Activated CD4-positive, alpha-beta T cell treated with anti-CD3 and anti-CD28 coated beads for 36 hours (primary cell): ENCODE measurements at regions of chr15 and their contacts with region 1.

Region 1: GRCh38 chr15:51907136-51907914 is 64.3 kb downstream of the LEO1 start:
- DNase-seq: no peak
- ATAC-seq: peak; percentile 49
- H3K4me3 Mint-ChIP-seq: no peak overlapping the region
- H3K27ac Mint-ChIP-seq: no peak overlapping the region
- H3K4me1 Mint-ChIP-seq: peaks cover 2% of the 10 kb centered on the region
- H3K27me3 Mint-ChIP-seq: no peaks in the 10 kb centered on the region

Region 2: GRCh38 chr15:51782357-51782896 is 124.9 kb before region 1 on chr15:
- CTCF ChIA-PET with region 1: no interaction called
- POLR2A ChIA-PET with region 1: no interaction called
- intact Hi-C with region 1: loop called in 1 of 2 experiments (anchors 2 kb)
- DNase-seq: no peak
- ATAC-seq: no peak
- H3K4me3 Mint-ChIP-seq: no peak overlapping the region
- H3K27ac Mint-ChIP-seq: no peak overlapping the region
- H3K4me1 Mint-ChIP-seq: peaks cover 3% of the 10 kb centered on the region
- H3K27me3 Mint-ChIP-seq: no peaks in the 10 kb centered on the region

Region 3: DNA sequence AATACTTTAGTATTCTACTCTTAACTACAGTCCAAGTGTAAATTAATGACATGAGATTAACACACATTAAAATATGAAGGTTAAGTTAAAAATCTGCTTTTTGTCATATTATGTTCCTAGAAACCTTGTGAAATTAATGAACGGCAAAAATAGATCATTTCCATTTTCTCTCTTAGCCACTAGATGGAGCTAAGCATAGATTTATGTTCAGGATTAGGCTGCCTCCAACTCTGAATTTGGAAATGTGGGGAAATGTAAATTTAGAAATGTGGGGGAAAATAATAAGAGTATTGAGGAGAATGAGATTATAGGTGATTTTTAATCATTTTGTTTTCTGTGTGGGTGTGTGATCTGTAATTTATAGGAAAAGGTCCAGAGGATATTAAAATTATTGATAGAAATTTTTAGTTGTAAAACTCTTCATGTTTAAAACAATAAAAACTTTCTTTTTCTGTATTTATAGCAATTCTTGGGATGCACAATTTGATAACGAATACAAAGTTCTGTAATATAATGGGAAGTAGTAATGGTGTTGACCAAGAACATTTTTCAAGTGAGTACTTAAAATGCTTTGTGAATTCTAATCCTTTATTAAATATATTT is 18.6 kb before region 1 on chr15:
- CTCF ChIA-PET with region 1: interaction called, 23 read pairs
- POLR2A ChIA-PET with region 1: no interaction called
- intact Hi-C with region 1: no loop called
- DNase-seq: no peak
- ATAC-seq: no peak
- H3K4me3 Mint-ChIP-seq: no peak overlapping the region
- H3K27ac Mint-ChIP-seq: no peak overlapping the region
- H3K4me1 Mint-ChIP-seq: peaks cover 7% of the 10 kb centered on the region
- H3K27me3 Mint-ChIP-seq: no peaks in the 10 kb centered on the region

Region 4: GRCh38 chr15:51924156-51925068 is 17.1 kb after region 1 on chr15:
- CTCF ChIA-PET with region 1: no interaction called
- POLR2A ChIA-PET with region 1: no interaction called
- intact Hi-C with region 1: no loop called
- DNase-seq: no peak
- ATAC-seq: no peak
- H3K4me3 Mint-ChIP-seq: no peak overlapping the region
- H3K27ac Mint-ChIP-seq: peak overlapping the region; percentile 18
- H3K4me1 Mint-ChIP-seq: no peaks in the 10 kb centered on the region
- H3K27me3 Mint-ChIP-seq: no peaks in the 10 kb centered on the region

Region 5: DNA sequence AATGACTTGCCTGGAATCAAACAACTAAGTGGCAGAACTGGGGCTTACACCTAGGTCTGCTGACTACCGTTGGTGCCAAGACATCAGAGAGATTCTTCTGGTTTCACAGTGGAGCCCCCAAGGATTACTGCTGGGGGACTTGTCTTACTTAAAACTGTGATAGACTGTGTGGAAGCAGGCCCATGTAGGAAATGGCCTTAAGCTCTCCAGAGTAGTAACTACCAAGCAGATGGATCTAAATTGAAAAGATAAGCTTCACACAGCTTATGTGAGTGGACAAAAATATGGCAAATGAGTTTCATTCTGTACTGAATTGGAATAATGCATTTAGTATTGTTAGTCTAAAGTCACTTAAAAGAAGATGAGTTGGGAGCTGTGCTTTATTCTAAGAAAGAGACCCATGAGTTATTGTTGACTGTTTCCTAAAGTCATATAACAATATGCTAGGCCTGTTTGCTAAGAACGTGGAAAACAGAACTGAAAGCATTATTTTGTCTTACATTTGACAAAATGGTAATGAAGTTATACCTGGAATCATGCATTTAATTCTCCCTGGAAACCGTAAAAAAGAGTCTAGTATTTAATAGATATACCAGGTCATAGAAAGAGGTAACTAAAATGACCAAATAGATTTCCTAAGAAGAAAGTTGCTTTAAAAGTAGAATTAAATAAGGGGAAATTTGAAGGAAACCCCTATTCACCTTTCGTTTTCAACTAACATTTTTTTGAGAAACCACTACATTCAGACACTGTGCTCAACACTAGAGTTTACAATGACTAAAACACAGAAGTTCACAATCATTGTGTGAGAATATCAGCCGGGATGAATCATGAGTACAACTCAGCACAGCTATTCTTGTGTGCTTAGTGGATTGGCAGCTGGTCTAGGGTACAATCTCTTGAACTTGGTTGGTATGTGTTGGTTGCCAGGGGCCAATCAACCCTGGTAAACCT is 98.7 kb after region 1 on chr15:
- CTCF ChIA-PET with region 1: no interaction called
- POLR2A ChIA-PET with region 1: no interaction called
- intact Hi-C with region 1: no loop called
- DNase-seq: peak; percentile 54
- ATAC-seq: peak; percentile 90
- H3K4me3 Mint-ChIP-seq: peak overlapping the region; percentile 6
- H3K27ac Mint-ChIP-seq: peak overlapping the region; percentile 56
- H3K4me1 Mint-ChIP-seq: peaks cover 64% of the 10 kb centered on the region
- H3K27me3 Mint-ChIP-seq: no peaks in the 10 kb centered on the region

Region 6: DNA sequence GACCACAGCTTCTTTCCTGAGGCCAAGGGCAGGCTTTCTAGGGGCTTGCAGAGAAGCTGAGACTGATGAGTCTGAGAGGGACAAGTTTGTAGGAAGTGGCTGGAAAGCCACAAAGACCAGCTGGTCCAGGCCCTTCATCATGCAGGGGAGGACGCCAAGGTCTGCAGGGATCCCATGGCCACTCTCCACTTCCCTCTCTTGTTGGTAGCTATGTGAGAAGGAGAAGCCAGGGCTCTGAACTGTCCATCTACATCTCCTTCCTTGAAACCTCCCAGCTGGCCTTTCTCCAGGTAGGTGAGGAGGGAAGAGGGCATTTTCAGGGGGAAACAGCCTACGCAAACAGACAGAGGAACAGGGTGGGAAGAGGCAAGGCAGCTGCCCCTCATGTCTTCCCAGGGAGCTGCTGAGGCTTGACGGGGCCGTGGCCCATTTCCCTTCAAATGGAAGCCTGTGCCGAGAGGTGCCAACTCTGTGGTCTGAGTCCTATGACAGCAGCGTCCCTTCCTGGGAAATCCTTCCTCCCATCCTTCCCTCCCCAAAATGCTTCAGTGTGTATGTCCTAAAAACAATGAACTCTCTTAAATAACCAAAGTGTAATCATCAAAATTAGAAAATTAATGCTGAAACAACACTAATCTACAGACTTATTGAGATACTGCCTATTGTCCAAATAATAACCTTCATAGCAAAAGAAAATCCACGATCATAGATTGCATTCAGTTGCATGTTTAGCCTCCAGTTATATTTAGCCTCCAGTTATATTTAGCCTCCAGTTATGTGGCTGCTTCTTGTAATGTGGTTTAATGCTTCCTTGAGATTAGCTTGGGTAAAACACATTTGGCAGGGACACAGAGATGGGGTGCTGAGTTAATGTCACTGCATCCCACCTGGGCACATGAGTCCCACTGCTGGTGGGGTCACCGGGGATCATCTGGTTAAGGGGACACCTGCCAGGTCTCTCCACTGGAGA is 247.9 kb after region 1 on chr15:
- CTCF ChIA-PET with region 1: no interaction called
- POLR2A ChIA-PET with region 1: no interaction called
- intact Hi-C with region 1: no loop called
- DNase-seq: no peak
- ATAC-seq: no peak
- H3K4me3 Mint-ChIP-seq: no peak overlapping the region
- H3K27ac Mint-ChIP-seq: no peak overlapping the region
- H3K4me1 Mint-ChIP-seq: no peaks in the 10 kb centered on the region
- H3K27me3 Mint-ChIP-seq: no peaks in the 10 kb centered on the region